ENCODE measurements at regions of chr4 and their contacts with region 1.

Region 1: DNA sequence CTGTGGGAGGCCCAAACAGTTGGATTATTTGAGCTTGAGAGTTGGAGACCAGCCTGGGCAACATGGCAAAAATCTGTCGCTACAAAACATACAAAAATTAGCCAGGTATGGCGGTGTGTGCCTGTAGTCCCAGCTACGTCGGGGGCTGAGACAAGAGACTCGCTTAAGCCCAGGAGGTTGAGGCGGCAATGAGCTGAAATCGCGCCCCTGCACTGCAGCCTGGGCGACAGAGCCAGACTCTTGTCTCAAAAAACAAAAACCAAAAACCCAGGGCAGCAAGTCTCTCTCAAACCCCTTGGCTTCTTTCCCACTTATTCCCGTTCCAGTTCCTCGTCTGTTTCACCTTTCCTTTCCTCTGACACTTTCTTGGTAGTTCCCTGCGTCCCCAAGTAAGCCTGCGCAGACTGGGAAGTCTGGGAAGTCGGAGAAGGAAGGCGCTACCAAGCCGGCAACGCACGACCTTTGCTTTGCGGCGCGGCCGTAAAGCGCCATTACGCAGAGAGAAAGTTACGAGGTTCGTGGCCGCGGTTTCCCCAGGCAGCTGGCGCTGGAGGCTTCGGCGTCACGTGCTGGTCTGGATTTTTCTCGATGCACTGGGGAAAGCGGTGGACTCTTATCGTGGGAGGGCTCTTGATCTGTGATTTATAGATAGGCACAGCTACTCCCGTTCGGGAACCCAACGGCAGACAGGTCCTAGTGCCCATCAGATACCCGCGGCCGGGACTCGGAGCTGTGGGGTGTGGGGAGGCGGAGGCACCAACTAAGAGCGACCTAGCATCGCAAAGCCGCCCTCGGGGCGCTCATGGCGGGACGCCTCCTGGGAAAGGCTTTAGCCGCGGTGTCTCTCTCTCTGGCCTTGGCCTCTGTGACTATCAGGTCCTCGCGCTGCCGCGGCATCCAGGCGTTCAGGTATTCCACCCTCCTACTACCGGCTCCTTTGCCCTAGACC is at the start of gene NUDT9:
- DNase-seq: peak; percentile 88
- H3K4me3 ChIP-seq: peak within 1 kb of the TSS; percentile 83
- H3K27ac ChIP-seq: peak within 1 kb of the TSS; percentile 80
- H3K4me1 ChIP-seq: peaks cover 31% of the 10 kb centered on the region
- CTCF ChIP-seq: 0 out of 2 replicates have a peak, but pooled peaks have one; percentile 18
- total RNA-seq, gene NUDT9: 9.0 and 11.4 TPM in 2 replicates

Region 2: DNA sequence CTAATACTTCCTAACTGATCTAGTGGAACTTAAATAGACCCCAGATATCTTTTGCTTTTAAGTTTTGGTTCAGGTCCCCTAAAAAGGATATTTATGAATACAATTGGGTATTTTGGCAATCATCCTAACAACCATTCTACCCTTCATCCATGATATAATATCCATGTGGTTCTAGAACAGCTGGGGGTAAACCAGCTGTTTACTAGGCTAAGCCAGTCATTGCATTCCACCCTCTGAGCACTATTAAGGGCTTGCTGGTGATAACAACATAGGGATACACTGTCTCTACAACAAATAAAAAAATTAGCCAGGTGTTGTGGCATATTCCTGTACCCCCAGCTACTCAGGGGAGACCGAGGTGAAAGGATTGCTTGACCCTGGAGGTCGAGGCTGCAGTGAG is 1007.7 kb before region 1 on chr4:
- CTCF ChIA-PET with region 1: no interaction called
- POLR2A ChIA-PET with region 1: interaction called, 10 read pairs
- intact Hi-C with region 1: no loop called
- DNase-seq: no peak
- H3K4me3 ChIP-seq: no peak overlapping the region
- H3K27ac ChIP-seq: no peak overlapping the region
- H3K4me1 ChIP-seq: no peaks in the 10 kb centered on the region
- CTCF ChIP-seq: no peak

Region 3: DNA sequence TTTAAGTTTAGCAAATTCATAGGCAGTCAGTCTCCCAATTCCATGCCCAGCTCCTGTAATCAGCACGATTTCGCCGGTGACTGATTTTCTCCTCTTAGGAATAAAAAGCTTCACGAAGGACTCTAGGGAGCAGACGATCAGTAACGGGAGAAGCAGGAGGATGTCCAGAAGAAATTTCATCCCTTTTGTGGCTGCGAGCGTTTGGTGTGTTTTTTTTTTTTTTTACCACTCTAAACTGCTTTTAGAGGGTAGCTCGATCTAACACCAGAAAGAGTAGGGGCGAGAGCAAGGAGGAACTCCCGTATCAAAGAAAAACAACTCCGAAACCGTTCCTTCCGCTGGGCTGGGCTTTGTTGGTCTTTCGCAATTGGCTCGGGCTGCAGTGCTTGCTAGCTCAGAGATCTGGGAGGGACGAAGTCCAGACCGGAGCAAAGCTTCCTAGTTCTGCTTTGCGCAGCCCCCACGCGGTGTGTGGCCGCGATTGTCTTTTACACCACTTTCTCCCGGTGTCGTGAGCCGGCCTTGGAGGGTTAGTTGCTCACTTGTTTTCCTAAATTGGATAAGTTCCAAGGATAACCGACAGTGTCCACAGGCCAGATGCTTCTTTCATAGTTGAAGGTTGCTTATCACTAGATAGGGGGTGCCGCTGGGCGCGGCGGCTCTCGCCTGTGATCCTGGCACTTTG is 31.3 kb before region 1 on chr4 and contains the start of gene HSD17B11:
- CTCF ChIA-PET with region 1: no interaction called
- POLR2A ChIA-PET with region 1: interaction called, 10 read pairs
- intact Hi-C with region 1: loop called (anchors 1 kb)
- DNase-seq: peak; percentile 94
- H3K4me3 ChIP-seq: peak within 1 kb of the TSS; percentile 73
- H3K27ac ChIP-seq: peak within 1 kb of the TSS; percentile 54
- H3K4me1 ChIP-seq: peaks cover 17% of the 10 kb centered on the region
- CTCF ChIP-seq: peak; percentile 56
- total RNA-seq, gene HSD17B11: 4.7 and 9.0 TPM in 2 replicates

Region 4: GRCh38 chr4:87973283-87974169 is 551.1 kb after region 1 on chr4:
- CTCF ChIA-PET with region 1: no interaction called
- POLR2A ChIA-PET with region 1: no interaction called
- intact Hi-C with region 1: no loop called
- DNase-seq: peak; percentile 60
- H3K4me3 ChIP-seq: no peak overlapping the region
- H3K27ac ChIP-seq: no peak overlapping the region
- H3K4me1 ChIP-seq: peaks cover 9% of the 10 kb centered on the region
- CTCF ChIP-seq: peak; percentile 90

Measured in OCI-LY7 (cell line).